PC-9 (cell line): ENCODE measurements at regions of chr17 and their contacts with region 1.

Region 1: DNA sequence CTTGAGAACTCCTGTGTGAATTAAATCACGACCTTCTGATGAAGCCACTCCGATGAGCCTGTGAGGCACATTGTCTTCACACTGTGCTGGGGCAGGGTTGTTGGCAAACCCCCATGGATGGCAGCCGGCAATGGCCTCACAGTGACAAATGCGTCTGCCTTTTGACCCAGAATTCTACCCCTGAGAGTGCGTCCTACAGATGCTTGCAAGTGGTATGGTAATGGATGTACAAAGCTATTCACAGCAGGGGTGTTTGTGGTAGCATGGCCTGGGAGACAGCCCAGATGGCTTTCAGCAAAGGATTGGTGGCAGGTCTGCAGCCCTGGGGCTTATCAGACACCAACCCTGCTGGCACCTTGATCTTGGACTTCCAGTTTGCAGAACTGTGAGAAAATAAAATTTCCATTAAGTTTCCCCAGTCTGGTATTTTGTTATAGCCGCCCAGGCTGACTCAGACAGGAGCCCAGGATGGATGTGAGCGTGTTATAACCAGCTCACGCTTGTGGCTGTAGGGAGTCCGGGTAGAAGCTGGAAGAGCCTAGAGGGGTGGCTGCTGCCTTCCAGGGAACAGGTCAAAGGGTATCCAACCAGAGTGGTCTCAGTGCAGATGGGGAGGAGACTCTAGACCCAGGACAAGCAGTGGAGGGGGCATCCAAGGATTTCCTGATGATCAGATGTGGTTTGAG is 10.1 kb downstream of the AFMID start:
- DNase-seq: no peak
- H3K4me3 ChIP-seq: no peak overlapping the region
- H3K27ac ChIP-seq: no peak overlapping the region
- H3K4me1 ChIP-seq: no peaks in the 10 kb centered on the region; the same call in 1 of the 2 replicates
- H3K27me3 ChIP-seq: no peaks in the 10 kb centered on the region
- CTCF ChIP-seq: no peak

Region 2: DNA sequence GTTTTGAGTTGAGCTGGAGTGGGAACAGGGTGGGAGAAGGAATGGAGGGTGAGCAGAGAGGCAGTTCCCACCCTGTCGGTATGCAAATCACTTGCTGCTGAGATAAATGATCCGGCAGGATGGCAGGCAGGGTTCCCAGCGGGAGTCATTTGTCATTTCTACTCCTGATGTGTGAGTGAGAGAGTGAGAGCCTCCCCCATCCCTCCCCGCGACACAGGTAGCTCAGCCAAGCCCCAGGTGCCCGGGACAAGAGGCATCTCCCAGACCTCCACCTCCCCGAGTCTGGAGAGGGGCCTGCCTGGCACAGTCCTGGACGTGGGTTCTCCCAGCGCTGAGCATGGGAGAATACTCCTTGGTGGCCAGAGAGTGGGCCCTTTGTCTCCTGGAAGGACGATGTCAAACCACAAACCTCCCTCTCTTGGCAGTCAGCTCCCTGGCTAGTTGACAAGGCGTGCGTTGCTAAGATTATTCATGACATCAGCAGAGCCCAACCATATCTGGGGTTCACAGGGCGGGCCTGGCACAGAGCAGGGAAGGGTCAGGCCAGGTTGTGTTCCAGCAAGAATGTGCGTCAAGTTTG is 272.4 kb before region 1 on chr17:
- CTCF ChIA-PET with region 1: no interaction called
- POLR2A ChIA-PET with region 1: no interaction called
- intact Hi-C with region 1: no loop called
- DNase-seq: no peak
- H3K4me3 ChIP-seq: no peak overlapping the region
- H3K27ac ChIP-seq: no peak overlapping the region
- H3K4me1 ChIP-seq: no peaks in the 10 kb centered on the region
- H3K27me3 ChIP-seq: peaks cover 83% of the 10 kb centered on the region
- CTCF ChIP-seq: no peak

Region 3: DNA sequence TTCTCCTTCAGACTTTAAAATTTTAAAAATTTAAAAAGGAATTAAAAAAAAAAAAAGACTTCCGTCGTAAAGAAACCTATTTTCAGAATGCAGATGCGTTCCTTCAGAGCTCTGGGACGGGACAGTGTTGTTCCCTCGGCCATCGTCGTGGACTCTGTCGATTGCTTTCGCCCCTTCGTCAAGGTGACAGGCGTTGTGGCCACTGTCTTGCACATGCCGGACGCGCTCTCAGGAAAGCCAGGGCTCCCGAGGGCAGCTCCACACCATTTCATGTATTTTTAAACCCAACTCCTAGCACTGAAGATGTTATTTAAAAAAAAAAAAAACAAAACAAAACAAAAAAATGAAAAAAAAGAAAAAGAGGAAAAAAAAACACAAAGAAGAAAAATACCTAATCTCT is 91.1 kb before region 1 on chr17:
- CTCF ChIA-PET with region 1: no interaction called
- POLR2A ChIA-PET with region 1: interaction called, 12 read pairs
- intact Hi-C with region 1: no loop called
- DNase-seq: no peak
- H3K4me3 ChIP-seq: no peak overlapping the region
- H3K27ac ChIP-seq: no peak overlapping the region
- H3K4me1 ChIP-seq: no peaks in the 10 kb centered on the region
- H3K27me3 ChIP-seq: no peaks in the 10 kb centered on the region
- CTCF ChIP-seq: no peak

Region 4: GRCh38 chr17:78526231-78527025 is 329.1 kb after region 1 on chr17:
- CTCF ChIA-PET with region 1: interaction called, 10 read pairs
- POLR2A ChIA-PET with region 1: no interaction called
- intact Hi-C with region 1: no loop called
- DNase-seq: peak; percentile 83 to 94
- H3K4me3 ChIP-seq: no peak overlapping the region
- H3K27ac ChIP-seq: peak overlapping the region; percentile 63
- H3K4me1 ChIP-seq: peaks cover 21% of the 10 kb centered on the region
- H3K27me3 ChIP-seq: no peaks in the 10 kb centered on the region
- CTCF ChIP-seq: no peak

Region 5: GRCh38 chr17:78925234-78925633 is 727.9 kb after region 1 on chr17 and contains the start of gene TIMP2:
- CTCF ChIA-PET with region 1: no interaction called
- POLR2A ChIA-PET with region 1: no interaction called
- intact Hi-C with region 1: no loop called
- DNase-seq: peak in 1 of 2 experiments; percentile 78
- H3K4me3 ChIP-seq: peak within 1 kb of the TSS; percentile 73
- H3K27ac ChIP-seq: no peak within 1 kb of the TSS
- H3K4me1 ChIP-seq: no peaks in the 10 kb centered on the region
- H3K27me3 ChIP-seq: no peaks in the 10 kb centered on the region
- CTCF ChIP-seq: 0 out of 2 replicates have a peak, but pooled peaks have one; percentile 22
- total RNA-seq, gene TIMP2: 90.5 and 114 TPM in 2 replicates